CD4-positive, alpha-beta T cell (primary cell): ENCODE measurements at regions of chr12 and their contacts with region 1.

Region 1: DNA sequence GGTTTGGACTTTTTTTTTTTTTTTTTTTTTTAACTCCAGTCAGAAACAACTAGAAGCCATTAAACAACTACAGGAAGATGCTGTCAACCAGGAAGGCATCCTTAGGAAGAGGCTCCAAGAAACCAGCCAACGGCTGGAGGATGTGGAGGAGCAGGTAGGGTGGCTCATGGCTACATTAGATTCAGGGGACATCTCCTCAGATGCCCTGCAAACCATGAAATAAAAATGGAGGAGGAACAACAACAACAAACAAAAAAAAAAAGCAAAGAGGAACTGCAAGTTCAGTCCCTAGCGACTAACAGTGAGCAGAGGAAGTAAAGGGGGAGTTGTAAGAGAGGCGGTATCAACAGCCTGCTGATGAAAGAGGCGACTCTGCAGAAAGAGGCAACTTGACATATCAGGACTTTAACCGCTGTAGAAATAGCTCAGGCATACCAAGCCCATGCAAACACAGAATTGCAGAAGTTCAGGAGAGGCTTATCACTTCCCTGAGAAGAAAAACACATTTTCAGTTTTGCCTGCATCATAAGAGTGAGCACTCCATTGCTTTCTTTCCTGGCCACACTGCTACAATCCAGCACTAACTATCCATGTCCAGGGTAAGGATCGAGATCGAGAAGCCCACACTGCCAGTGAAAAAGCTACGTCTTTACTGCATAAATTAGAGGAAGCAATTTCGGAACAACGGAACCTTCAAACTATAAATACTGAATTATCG is 103.5 kb upstream of the BCAT1 start:
- DNase-seq: peak; percentile 15 to 89 (median 48)
- ATAC-seq: peak; percentile 75
- H3K4me3 ChIP-seq: peak overlapping the region; percentile 72
- H3K4me3 Mint-ChIP-seq: peak overlapping the region; percentile 99
- H3K27ac ChIP-seq: peak overlapping the region; percentile 79
- H3K27ac Mint-ChIP-seq: peak overlapping the region; percentile 99
- H3K4me1 ChIP-seq: peaks cover 20% of the 10 kb centered on the region
- H3K4me1 Mint-ChIP-seq: peaks cover 54% of the 10 kb centered on the region
- H3K27me3 ChIP-seq: no peaks in the 10 kb centered on the region
- H3K27me3 Mint-ChIP-seq: no peaks in the 10 kb centered on the region
- CTCF ChIP-seq: no peak

Region 2: GRCh38 chr12:24991209-24992049 is 60.9 kb before region 1 on chr12:
- CTCF ChIA-PET with region 1: interaction called, 3 read pairs
- POLR2A ChIA-PET with region 1: interaction called, 6 read pairs
- intact Hi-C with region 1: loop called (anchors 1 to 5 kb)
- DNase-seq: peak in 6 of 14 experiments; percentile 1 to 82 (median 42)
- ATAC-seq: peak; percentile 97
- H3K4me3 ChIP-seq: no peak overlapping the region
- H3K4me3 Mint-ChIP-seq: no peak overlapping the region
- H3K27ac ChIP-seq: no peak overlapping the region
- H3K27ac Mint-ChIP-seq: no peak overlapping the region
- H3K4me1 ChIP-seq: no peaks in the 10 kb centered on the region
- H3K4me1 Mint-ChIP-seq: no peaks in the 10 kb centered on the region
- H3K27me3 ChIP-seq: no peaks in the 10 kb centered on the region
- H3K27me3 Mint-ChIP-seq: no peaks in the 10 kb centered on the region
- CTCF ChIP-seq: peak; percentile 67

Region 3: GRCh38 chr12:25089738-25090137 is 37.4 kb after region 1 on chr12:
- CTCF ChIA-PET with region 1: interaction called, 3 read pairs
- POLR2A ChIA-PET with region 1: interaction called, 16 read pairs
- intact Hi-C with region 1: loop called in 1 of 2 experiments (anchors 5 kb)
- DNase-seq: peak in 2 of 14 experiments; percentile 9 to 22
- ATAC-seq: no peak
- H3K4me3 ChIP-seq: no peak overlapping the region
- H3K4me3 Mint-ChIP-seq: no peak overlapping the region
- H3K27ac ChIP-seq: no peak overlapping the region
- H3K27ac Mint-ChIP-seq: peak overlapping the region; percentile 63
- H3K4me1 ChIP-seq: no peaks in the 10 kb centered on the region
- H3K4me1 Mint-ChIP-seq: peaks cover 22% of the 10 kb centered on the region
- H3K27me3 ChIP-seq: no peaks in the 10 kb centered on the region
- H3K27me3 Mint-ChIP-seq: no peaks in the 10 kb centered on the region
- CTCF ChIP-seq: no peak

Region 4: DNA sequence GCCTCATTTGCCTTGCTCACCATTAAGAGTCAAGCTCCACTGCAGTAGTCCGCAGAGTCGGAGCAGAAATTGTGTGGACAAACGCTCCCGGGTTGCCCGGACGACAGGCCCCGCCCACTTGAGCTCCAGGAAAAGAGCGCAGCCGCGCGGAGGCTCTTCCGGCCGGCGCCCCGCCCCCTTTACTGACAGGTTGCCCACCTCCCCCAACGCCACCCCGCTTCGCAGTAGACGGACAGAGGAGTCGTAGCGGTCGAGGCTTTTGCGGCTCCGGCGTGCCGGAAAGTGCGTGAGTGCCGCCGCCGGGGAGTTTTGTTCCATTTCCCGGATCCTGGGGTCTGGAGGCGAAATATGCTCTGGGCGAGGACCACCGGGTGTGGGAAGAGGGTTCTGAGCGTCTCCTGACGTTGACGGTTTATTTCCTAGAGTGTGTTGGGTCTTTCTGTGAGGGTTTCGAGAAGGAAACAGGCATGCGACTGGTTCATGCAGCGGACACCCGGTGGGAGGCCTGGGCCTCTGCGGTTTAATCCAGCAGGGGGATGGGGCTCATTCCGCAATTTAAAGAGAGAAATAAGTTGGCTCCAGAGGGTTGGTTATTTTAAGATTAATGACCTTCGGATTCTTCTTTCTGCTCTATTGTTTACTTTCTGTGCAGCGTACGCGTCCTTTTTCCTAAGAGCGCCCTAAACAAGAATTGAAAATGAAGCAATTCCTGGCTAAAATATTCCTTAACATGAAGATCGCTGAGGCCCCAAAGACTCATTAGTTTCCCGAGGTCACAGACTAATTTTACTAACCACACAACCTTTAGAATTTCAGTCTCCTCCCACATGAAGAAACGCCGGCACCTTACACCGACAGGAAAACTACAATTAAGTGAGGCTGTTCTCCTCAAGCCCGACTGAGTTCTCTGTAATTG is 143.0 kb after region 1 on chr12 and contains the starts of genes DNAI7 and ETFRF1:
- CTCF ChIA-PET with region 1: interaction called, 3 read pairs
- POLR2A ChIA-PET with region 1: interaction called, 10 read pairs
- intact Hi-C with region 1: no loop called
- DNase-seq: peak; percentile 89 to 98 (median 95)
- ATAC-seq: peak; percentile 94
- H3K4me3 ChIP-seq: peak within 1 kb of the TSS; percentile 90
- H3K4me3 Mint-ChIP-seq: peak within 1 kb of the TSS; percentile 98
- H3K27ac ChIP-seq: peak within 1 kb of the TSS; percentile 92 to 96
- H3K27ac Mint-ChIP-seq: peak within 1 kb of the TSS; percentile 98
- H3K4me1 ChIP-seq: peaks cover 14% of the 10 kb centered on the region
- H3K4me1 Mint-ChIP-seq: peaks cover 51% of the 10 kb centered on the region
- H3K27me3 ChIP-seq: no peaks in the 10 kb centered on the region
- H3K27me3 Mint-ChIP-seq: no peaks in the 10 kb centered on the region
- CTCF ChIP-seq: no peak
- total RNA-seq, gene DNAI7: 0.36 TPM in 1 of 2 experiments, not detected in the other
- total RNA-seq, gene ETFRF1: 32.9 to 39.8 TPM

Region 5: DNA sequence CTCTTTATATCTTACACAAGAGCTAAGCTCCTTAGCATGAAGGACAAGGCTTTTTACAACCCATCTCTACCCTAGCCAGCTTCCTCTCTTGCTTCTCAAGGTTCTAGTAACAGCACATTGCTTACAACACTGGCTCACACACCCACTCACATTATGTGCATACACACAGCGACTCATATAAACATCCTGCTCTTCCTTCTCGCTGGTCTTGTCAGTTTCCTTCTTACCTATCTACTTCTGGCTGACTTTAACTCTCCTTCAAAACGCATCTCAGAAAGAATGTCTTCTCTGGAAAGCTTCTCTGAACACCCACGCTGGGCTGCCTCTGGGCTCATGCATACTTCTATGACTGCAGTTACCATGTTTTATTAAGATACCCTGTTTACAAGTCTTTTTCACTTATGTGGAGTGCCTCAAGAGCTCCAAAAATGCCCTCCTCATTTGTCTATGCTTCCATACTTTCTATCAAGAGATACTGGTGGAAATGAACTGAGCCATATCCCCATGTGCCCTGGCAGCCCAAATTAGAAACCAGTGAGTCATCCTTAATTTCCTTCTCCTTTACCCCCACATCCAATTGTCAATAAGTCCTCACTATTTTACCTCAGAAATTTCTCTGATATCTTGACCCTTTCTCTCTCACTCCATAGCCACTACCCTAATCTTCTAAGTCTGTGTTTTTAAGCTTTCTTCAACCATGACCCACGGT is 325.3 kb after region 1 on chr12:
- CTCF ChIA-PET with region 1: no interaction called
- POLR2A ChIA-PET with region 1: interaction called, 5 read pairs
- intact Hi-C with region 1: loop called in 1 of 2 experiments (anchors 2 kb)
- DNase-seq: peak in 12 of 14 experiments; percentile 6 to 79 (median 29)
- ATAC-seq: peak; percentile 92
- H3K4me3 ChIP-seq: no peak overlapping the region
- H3K4me3 Mint-ChIP-seq: peak overlapping the region; percentile 63
- H3K27ac ChIP-seq: peak overlapping the region; percentile 26 to 65
- H3K27ac Mint-ChIP-seq: peak overlapping the region; percentile 89
- H3K4me1 ChIP-seq: peaks cover 30% of the 10 kb centered on the region
- H3K4me1 Mint-ChIP-seq: peaks cover 47% of the 10 kb centered on the region
- H3K27me3 ChIP-seq: no peaks in the 10 kb centered on the region
- H3K27me3 Mint-ChIP-seq: no peaks in the 10 kb centered on the region
- CTCF ChIP-seq: no peak

Region 6: GRCh38 chr12:27024291-27024690 is 1971.9 kb after region 1 on chr12:
- CTCF ChIA-PET with region 1: no interaction called
- POLR2A ChIA-PET with region 1: no interaction called
- intact Hi-C with region 1: loop called in 1 of 2 experiments (anchors 5 kb)
- DNase-seq: no peak
- ATAC-seq: no peak
- H3K4me3 ChIP-seq: no peak overlapping the region
- H3K4me3 Mint-ChIP-seq: peak overlapping the region; percentile 91
- H3K27ac ChIP-seq: no peak overlapping the region
- H3K27ac Mint-ChIP-seq: peak overlapping the region; percentile 92
- H3K4me1 ChIP-seq: peaks cover 19% of the 10 kb centered on the region
- H3K4me1 Mint-ChIP-seq: peaks cover 43% of the 10 kb centered on the region
- H3K27me3 ChIP-seq: no peaks in the 10 kb centered on the region
- H3K27me3 Mint-ChIP-seq: no peaks in the 10 kb centered on the region
- CTCF ChIP-seq: no peak